ENCODE measurements at regions of chr5 and their contacts with region 1.

Region 1: DNA sequence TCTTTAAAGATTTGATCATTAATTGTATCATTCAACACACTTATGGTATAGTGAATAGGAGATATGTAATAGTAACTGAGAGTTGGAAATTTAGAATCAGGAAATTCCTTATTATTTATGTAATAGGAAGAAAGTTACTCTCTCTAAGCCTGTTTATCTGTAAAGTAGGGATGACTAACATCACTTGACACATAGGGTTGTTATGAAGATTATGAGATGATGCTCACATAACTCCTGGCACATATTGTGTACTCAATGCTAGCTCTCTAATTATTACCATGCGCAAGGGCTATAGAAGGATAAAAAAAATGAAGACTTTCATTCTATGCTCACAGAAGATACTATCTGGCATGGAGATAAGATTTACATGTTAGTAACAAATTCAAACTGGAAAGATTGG is 149.9 kb downstream of the ISOC1 start:
- DNase-seq: no peak
- H3K4me3 ChIP-seq: no peak overlapping the region
- H3K27ac ChIP-seq: no peak overlapping the region
- H3K4me1 ChIP-seq: no peaks in the 10 kb centered on the region
- H3K27me3 ChIP-seq: no peaks in the 10 kb centered on the region
- CTCF ChIP-seq: no peak
- POLR2A ChIP-seq: no peak

Region 2: DNA sequence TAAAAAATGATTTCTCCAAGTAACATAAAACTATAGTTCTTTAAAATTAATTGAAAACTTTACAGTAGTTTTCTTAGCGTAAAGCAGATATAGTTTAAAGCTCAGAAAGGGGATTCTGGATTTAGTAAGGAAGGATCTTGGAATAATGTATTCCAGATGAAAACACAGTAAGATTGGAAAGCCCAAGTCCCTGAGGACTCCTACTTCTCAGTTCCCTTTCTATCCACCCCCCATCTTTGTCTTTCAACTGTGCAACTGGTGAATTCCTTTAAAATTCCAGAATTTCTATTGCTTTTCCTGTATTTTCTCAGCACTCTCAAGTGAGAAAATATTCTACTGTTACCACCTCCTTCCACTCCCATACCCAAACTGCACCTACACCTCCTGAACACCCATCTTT is 521.9 kb before region 1 on chr5:
- intact Hi-C with region 1: loop called (anchors 5 kb)
- DNase-seq: no peak
- H3K4me3 ChIP-seq: no peak overlapping the region
- H3K27ac ChIP-seq: no peak overlapping the region
- H3K4me1 ChIP-seq: no peaks in the 10 kb centered on the region
- H3K27me3 ChIP-seq: no peaks in the 10 kb centered on the region
- CTCF ChIP-seq: no peak
- POLR2A ChIP-seq: no peak

Measured in breast epithelium (tissue), 4 donors.